PC-3 (cell line): ENCODE measurements at regions of chr2 and their contacts with region 1.

Region 1: GRCh38 chr2:181715033-181715630 is 34.8 kb upstream of the NEUROD1 start:
- DNase-seq: peak; percentile 89
- ATAC-seq: peak; percentile 84
- H3K4me3 ChIP-seq: no peak overlapping the region
- H3K27ac ChIP-seq: no peak overlapping the region
- H3K4me1 ChIP-seq: no peaks in the 10 kb centered on the region
- H3K27me3 ChIP-seq: no peaks in the 10 kb centered on the region
- CTCF ChIP-seq: peak; percentile 92

Region 2: GRCh38 chr2:181077128-181077709 is 637.9 kb before region 1 on chr2:
- CTCF ChIA-PET with region 1: interaction called, 6 read pairs
- POLR2A ChIA-PET with region 1: no interaction called
- intact Hi-C with region 1: loop called (anchors 5 kb)
- DNase-seq: peak; percentile 74
- ATAC-seq: peak; percentile 89
- H3K4me3 ChIP-seq: no peak overlapping the region
- H3K27ac ChIP-seq: no peak overlapping the region
- H3K4me1 ChIP-seq: no peaks in the 10 kb centered on the region
- H3K27me3 ChIP-seq: no peaks in the 10 kb centered on the region
- CTCF ChIP-seq: peak; percentile 82

Region 3: GRCh38 chr2:181438261-181438660 is 276.9 kb before region 1 on chr2:
- CTCF ChIA-PET with region 1: no interaction called
- POLR2A ChIA-PET with region 1: no interaction called
- intact Hi-C with region 1: loop called (anchors 1 kb)
- DNase-seq: peak; percentile 63
- ATAC-seq: peak; percentile 66
- H3K4me3 ChIP-seq: no peak overlapping the region
- H3K27ac ChIP-seq: no peak overlapping the region
- H3K4me1 ChIP-seq: no peaks in the 10 kb centered on the region
- H3K27me3 ChIP-seq: no peaks in the 10 kb centered on the region
- CTCF ChIP-seq: peak; percentile 66

Region 4: DNA sequence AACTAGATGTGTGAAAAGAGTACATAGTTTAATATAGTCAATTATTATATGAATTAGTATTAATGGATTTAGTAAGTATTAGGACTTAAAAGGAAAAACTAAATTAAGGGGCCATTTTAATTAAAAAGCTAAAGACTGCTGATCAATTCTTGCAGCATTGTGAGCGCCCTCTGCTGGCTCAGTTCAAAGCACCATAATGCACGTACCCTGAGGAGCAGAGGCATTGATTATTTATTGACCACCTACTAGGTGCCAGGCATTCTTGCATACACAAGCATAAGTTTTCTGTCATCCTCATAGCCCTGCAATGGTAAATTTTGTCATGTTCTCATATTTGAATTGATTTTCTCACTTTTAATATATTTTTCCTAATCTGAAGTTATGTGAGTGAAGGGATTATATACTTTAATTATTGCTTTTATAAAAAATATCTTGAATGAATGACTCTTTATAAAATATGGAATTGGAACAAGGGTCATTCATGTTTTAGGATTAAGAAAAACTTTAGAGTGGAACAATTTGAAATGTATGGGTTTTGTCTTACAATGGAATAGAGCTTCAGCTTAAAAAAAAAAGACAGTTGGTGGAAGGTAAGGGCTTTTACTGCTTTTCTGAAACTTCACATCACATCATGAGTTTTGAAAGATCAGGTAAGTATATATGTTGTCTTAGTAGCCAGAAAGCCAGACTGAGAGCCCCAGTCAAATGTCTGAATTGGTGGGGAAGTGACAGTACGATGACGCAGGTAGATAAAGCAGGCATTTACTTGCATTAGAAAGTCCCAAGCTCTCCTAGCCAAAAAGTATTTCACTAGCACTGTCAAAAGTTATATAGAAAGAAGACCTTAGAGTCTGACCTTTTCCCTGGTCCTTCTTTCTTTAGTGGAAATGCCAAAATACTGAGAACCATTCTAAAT is 248.2 kb before region 1 on chr2:
- CTCF ChIA-PET with region 1: interaction called, 3 read pairs
- POLR2A ChIA-PET with region 1: no interaction called
- intact Hi-C with region 1: loop called (anchors 10 kb)
- DNase-seq: peak; percentile 67
- ATAC-seq: peak; percentile 50; the same call in 1 of the 2 replicates
- H3K4me3 ChIP-seq: no peak overlapping the region
- H3K27ac ChIP-seq: no peak overlapping the region
- H3K4me1 ChIP-seq: peaks cover 15% of the 10 kb centered on the region
- H3K27me3 ChIP-seq: no peaks in the 10 kb centered on the region
- CTCF ChIP-seq: peak; percentile 86

Region 5: GRCh38 chr2:181573140-181573736 is 141.9 kb before region 1 on chr2:
- CTCF ChIA-PET with region 1: interaction called, 32 read pairs
- POLR2A ChIA-PET with region 1: no interaction called
- intact Hi-C with region 1: loop called (anchors 1 kb)
- DNase-seq: peak; percentile 65
- ATAC-seq: no peak; the same call in 1 of the 2 replicates
- H3K4me3 ChIP-seq: no peak overlapping the region
- H3K27ac ChIP-seq: no peak overlapping the region
- H3K4me1 ChIP-seq: 0 out of 2 replicates have a peak, but pooled peaks cover 7% of the 10 kb centered on the region
- H3K27me3 ChIP-seq: no peaks in the 10 kb centered on the region
- CTCF ChIP-seq: peak; percentile 75